Activated CD8-positive, alpha-beta memory T cell treated with anti-CD3 and anti-CD28 coated beads, Interleukin-2, amount 10 ng/mL, durations not matched to agents 7 days and 5 days (primary cell): ENCODE measurements at regions of chr17 and their contacts with region 1.

Region 1: GRCh38 chr17:35537601-35538141 is at the start of gene SLFN12L:
- DNase-seq: peak; percentile 79
- ATAC-seq: peak; percentile 62
- H3K4me3 Mint-ChIP-seq: peak within 1 kb of the TSS; percentile 90
- H3K27ac Mint-ChIP-seq: peak within 1 kb of the TSS; percentile 99
- H3K4me1 Mint-ChIP-seq: peaks cover 42% of the 10 kb centered on the region
- H3K27me3 Mint-ChIP-seq: no peaks in the 10 kb centered on the region
- total RNA-seq, gene SLFN12L: 95.4 to 197 TPM

Region 2: GRCh38 chr17:35479271-35479670 is 58.4 kb before region 1 on chr17:
- CTCF ChIA-PET with region 1: no interaction called
- DNase-seq: no peak
- ATAC-seq: no peak
- H3K4me3 Mint-ChIP-seq: no peak overlapping the region
- H3K27ac Mint-ChIP-seq: no peak overlapping the region
- H3K4me1 Mint-ChIP-seq: peaks cover 22% of the 10 kb centered on the region
- H3K27me3 Mint-ChIP-seq: no peaks in the 10 kb centered on the region

Region 3: DNA sequence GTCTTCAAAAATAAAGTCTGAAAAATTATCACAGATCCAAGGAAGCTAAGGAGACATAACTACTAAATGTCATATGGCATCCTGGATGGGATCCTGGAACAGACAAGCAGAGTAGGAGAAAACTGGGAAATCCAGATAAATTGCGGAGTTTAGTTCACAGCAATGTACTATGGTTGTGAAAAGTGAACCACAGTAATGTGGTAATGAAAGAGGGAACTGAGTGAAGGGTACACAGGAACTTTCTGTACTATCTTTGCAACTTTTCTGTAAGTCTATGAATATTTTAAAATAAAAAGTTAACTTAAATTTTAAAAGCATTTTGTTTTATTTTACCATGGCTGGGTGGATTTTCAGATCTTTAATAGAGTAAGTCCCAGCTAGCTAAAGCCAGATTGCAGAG is 16.5 kb before region 1 on chr17:
- CTCF ChIA-PET with region 1: interaction called, 25 read pairs
- DNase-seq: no peak
- ATAC-seq: peak; percentile 13
- H3K4me3 Mint-ChIP-seq: peak overlapping the region; percentile 61
- H3K27ac Mint-ChIP-seq: peak overlapping the region; percentile 76
- H3K4me1 Mint-ChIP-seq: peaks cover 96% of the 10 kb centered on the region
- H3K27me3 Mint-ChIP-seq: no peaks in the 10 kb centered on the region